Pancreas (tissue), 10 donors: ENCODE measurements at regions of chr2 and their contacts with region 1.

Region 1: GRCh38 chr2:232438951-232439757 is 16.8 kb upstream of the ALPI start:
- DNase-seq: peak in 5 of 6 donors; percentile 22 to 70 (median 43)
- ATAC-seq: peak; percentile 74 to 83 (median 78)
- H3K4me3 ChIP-seq: no peak overlapping the region
- H3K27ac ChIP-seq: no peak overlapping the region
- H3K4me1 ChIP-seq: no peaks in the 10 kb centered on the region
- H3K27me3 ChIP-seq: no peaks in the 10 kb centered on the region
- CTCF ChIP-seq: peak; percentile 43 to 56 (median 46)

Region 2: GRCh38 chr2:231910771-231911170 is 528.4 kb before region 1 on chr2:
- intact Hi-C with region 1: loop called in 2 of 3 experiments (anchors 5 to 10 kb)
- DNase-seq: peak in 1 of 6 donors; percentile 35
- ATAC-seq: no peak
- H3K4me3 ChIP-seq: no peak overlapping the region
- H3K27ac ChIP-seq: no peak overlapping the region
- H3K4me1 ChIP-seq: no peaks in the 10 kb centered on the region
- H3K27me3 ChIP-seq: no peaks in the 10 kb centered on the region
- CTCF ChIP-seq: no peak

Region 3: GRCh38 chr2:232333361-232334270 is 105.5 kb before region 1 on chr2:
- intact Hi-C with region 1: loop called in 1 of 3 experiments (anchors 10 kb)
- DNase-seq: peak in 2 of 6 donors; percentile 24 to 56
- ATAC-seq: peak in 1 of 4 donors; percentile 11
- H3K4me3 ChIP-seq: no peak overlapping the region
- H3K27ac ChIP-seq: no peak overlapping the region
- H3K4me1 ChIP-seq: no peaks in the 10 kb centered on the region
- H3K27me3 ChIP-seq: no peaks in the 10 kb centered on the region
- CTCF ChIP-seq: no peak